Prostate gland (tissue), 2 donors: ENCODE measurements at regions of chr6 and their contacts with region 1.

Region 1: DNA sequence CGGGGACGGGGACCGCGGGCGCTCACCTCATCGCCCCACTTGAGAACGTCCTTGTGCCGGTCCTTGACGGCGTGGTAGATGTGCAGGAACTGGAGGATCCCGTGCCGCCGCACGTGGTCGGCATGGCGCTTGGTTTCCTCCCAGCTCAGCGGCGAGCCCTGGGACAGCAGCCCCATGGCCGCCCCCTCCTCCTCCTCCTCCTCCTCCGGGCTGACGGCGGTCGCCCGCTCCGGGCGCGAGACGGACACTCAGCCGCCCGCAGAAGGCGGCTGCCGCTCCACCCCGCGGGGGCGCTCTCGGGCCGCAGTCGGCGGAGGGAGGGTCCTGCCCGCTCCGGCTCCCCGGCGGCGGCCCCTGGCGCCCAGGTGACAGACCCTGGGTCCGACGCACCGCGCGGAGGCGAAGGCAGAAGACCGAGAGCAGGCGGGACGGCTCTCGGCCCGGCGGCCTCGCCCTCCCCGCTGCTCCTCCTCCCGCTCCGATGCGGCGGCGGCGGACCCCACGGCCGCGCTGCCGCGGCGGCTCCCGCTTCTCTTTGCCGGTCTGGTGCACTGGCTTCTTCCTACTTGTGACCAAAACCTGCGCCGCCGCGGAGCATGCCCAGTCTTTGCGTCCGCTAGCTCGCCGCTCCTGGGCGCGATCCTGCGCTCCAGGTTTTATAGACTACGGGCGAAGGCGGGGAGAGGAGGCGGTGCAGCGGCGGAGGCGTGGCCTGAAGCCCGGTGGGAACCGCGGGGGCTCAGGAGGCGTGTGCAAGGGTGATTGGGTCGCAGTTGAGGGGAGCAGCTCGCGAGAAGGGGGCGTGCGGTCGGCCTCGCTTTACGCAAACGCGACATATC is at the start of gene GCLC:
- DNase-seq: peak; percentile 93
- H3K4me3 ChIP-seq: peak within 1 kb of the TSS; percentile 79 to 95
- H3K27ac ChIP-seq: peak within 1 kb of the TSS; percentile 92 to 97
- H3K4me1 ChIP-seq: peaks cover 4% of the 10 kb centered on the region
- H3K27me3 ChIP-seq: no peaks in the 10 kb centered on the region
- CTCF ChIP-seq: peak; percentile 68 to 89 (median 84)
- POLR2A ChIP-seq: peak; percentile 86
- total RNA-seq, gene GCLC: 77.1 to 81.2 TPM

Region 2: GRCh38 chr6:52741872-52742271 is 802.8 kb before region 1 on chr6:
- intact Hi-C with region 1: no loop called
- DNase-seq: no peak
- H3K4me3 ChIP-seq: no peak overlapping the region
- H3K27ac ChIP-seq: no peak overlapping the region
- H3K4me1 ChIP-seq: no peaks in the 10 kb centered on the region
- H3K27me3 ChIP-seq: no peaks in the 10 kb centered on the region
- CTCF ChIP-seq: no peak
- POLR2A ChIP-seq: no peak

Region 3: DNA sequence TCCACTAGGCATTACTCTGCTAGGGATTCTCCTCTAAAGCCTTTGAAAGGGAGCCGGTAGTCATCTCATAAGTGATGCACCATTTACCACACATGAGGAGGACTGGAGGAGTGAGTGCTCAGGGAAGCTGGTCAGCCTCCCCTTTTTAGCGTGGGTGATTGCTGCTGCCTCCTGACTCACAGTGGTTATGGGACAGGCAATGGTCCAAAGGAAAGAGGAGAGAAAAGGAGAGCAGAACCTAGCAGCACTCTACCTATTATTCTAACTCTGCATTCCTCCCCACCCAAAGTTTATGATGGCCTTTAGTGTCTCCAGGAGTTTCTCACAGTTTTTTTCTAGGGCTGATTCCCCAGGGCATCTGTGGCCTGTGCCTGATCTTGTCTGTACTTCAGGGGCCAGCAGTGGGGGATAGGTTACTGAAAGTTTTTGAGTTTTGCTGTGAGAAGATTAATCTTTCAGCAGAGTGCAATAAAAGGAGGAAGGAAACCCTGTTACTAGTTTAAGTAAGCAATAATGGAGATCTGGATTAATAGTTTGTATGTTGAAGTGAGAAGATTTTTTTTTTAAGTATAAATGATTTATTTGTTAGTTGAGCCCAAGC is 36.6 kb after region 1 on chr6:
- intact Hi-C with region 1: no loop called
- DNase-seq: no peak
- H3K4me3 ChIP-seq: no peak overlapping the region
- H3K27ac ChIP-seq: no peak overlapping the region
- H3K4me1 ChIP-seq: no peaks in the 10 kb centered on the region
- H3K27me3 ChIP-seq: no peaks in the 10 kb centered on the region
- CTCF ChIP-seq: no peak
- POLR2A ChIP-seq: no peak

Region 4: DNA sequence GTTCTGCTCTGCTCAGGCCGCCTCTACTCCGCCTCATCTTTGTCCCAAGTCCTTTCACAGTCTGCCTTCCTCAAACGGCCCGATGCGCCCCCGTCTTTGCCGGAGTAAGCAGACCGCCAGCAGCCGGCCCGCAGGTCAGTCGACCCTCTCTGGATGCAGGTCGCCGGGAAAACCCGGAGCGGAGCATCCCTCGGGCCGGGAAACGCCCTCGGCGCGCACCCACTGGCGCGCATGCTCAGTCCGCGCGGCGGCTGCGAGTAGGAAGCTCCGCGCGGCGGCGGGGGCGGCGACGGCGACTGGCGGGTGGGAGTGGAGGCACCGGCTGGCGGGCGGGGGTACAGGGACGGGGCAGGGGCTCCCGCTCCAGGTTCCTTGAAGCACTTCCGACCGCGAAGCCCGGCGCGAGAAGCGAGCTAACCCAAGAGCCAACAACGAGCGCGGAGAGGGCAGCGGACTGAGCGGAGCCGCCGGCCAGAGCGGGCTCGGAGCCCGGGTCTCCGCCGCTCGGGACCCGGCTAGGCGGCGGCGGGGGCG is 250.1 kb after region 1 on chr6 and contains the start of gene LRRC1:
- intact Hi-C with region 1: loop called (anchors 10 kb)
- DNase-seq: peak; percentile 90
- H3K4me3 ChIP-seq: peak within 1 kb of the TSS; percentile 73 to 78
- H3K27ac ChIP-seq: peak within 1 kb of the TSS; percentile 81 to 83
- H3K4me1 ChIP-seq: no peaks in the 10 kb centered on the region
- H3K27me3 ChIP-seq: no peaks in the 10 kb centered on the region
- CTCF ChIP-seq: no peak
- POLR2A ChIP-seq: peak; percentile 73
- total RNA-seq, gene LRRC1: 25.0 to 25.6 TPM